ENCODE measurements at regions of chr6 and their contacts with region 1.

Region 1: GRCh38 chr6:36290661-36291620 is 21.1 kb downstream of the PNPLA1 start:
- DNase-seq: peak; percentile 35 to 51
- H3K4me3 ChIP-seq: no peak overlapping the region
- H3K4me3 Mint-ChIP-seq: no peak overlapping the region
- H3K27ac Mint-ChIP-seq: peak overlapping the region; percentile 66
- H3K4me1 ChIP-seq: peaks cover 17% of the 10 kb centered on the region
- H3K4me1 Mint-ChIP-seq: peaks cover 7% of the 10 kb centered on the region
- H3K27me3 ChIP-seq: no peaks in the 10 kb centered on the region
- H3K27me3 Mint-ChIP-seq: no peaks in the 10 kb centered on the region
- CTCF ChIP-seq: no peak

Region 2: GRCh38 chr6:36187446-36187845 is 103.5 kb before region 1 on chr6:
- CTCF ChIA-PET with region 1: no interaction called
- POLR2A ChIA-PET with region 1: no interaction called
- intact Hi-C with region 1: no loop called
- DNase-seq: no peak
- H3K4me3 ChIP-seq: no peak overlapping the region
- H3K4me3 Mint-ChIP-seq: no peak overlapping the region
- H3K27ac Mint-ChIP-seq: no peak overlapping the region
- H3K4me1 ChIP-seq: no peaks in the 10 kb centered on the region
- H3K4me1 Mint-ChIP-seq: no peaks in the 10 kb centered on the region
- H3K27me3 ChIP-seq: no peaks in the 10 kb centered on the region
- H3K27me3 Mint-ChIP-seq: no peaks in the 10 kb centered on the region
- CTCF ChIP-seq: no peak

Region 3: DNA sequence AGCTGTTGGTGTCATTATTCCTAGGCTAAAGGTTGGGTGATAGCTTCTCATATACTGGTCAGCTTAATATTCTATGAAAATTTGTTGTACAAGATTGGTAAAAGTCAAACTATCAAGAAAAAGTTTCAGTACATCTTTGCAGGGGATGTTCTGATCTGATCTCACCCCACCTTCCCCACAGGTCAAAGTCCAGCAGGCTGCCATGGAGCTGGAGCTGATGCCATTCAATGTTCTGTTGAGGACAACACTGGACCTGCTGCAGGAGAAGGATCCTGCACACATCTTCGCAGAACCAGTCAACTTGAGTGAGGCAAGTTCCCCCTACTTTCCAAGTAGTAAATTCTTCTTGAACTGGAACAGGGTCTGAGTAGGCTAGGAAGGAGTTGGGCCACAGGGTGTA is 81.3 kb before region 1 on chr6:
- CTCF ChIA-PET with region 1: interaction called, 10 read pairs
- POLR2A ChIA-PET with region 1: no interaction called
- intact Hi-C with region 1: no loop called
- DNase-seq: no peak
- H3K4me3 ChIP-seq: no peak overlapping the region
- H3K4me3 Mint-ChIP-seq: no peak overlapping the region
- H3K27ac Mint-ChIP-seq: no peak overlapping the region
- H3K4me1 ChIP-seq: no peaks in the 10 kb centered on the region
- H3K4me1 Mint-ChIP-seq: no peaks in the 10 kb centered on the region
- H3K27me3 ChIP-seq: no peaks in the 10 kb centered on the region
- H3K27me3 Mint-ChIP-seq: no peaks in the 10 kb centered on the region
- CTCF ChIP-seq: no peak

Region 4: GRCh38 chr6:36268478-36269275 is 22.3 kb before region 1 on chr6:
- CTCF ChIA-PET with region 1: no interaction called
- POLR2A ChIA-PET with region 1: no interaction called
- intact Hi-C with region 1: no loop called
- DNase-seq: no peak
- H3K4me3 ChIP-seq: no peak overlapping the region
- H3K4me3 Mint-ChIP-seq: no peak overlapping the region
- H3K27ac Mint-ChIP-seq: peak overlapping the region; percentile 71
- H3K4me1 ChIP-seq: peaks cover 3% of the 10 kb centered on the region; the same call in 1 of the 2 replicates
- H3K4me1 Mint-ChIP-seq: peaks cover 10% of the 10 kb centered on the region
- H3K27me3 ChIP-seq: no peaks in the 10 kb centered on the region
- H3K27me3 Mint-ChIP-seq: peaks cover 4% of the 10 kb centered on the region
- CTCF ChIP-seq: no peak